ENCODE measurements at regions of chr5 and their contacts with region 1.

Region 1: GRCh38 chr5:132426525-132427138 is 57.1 kb downstream of the SLC22A5 start:
- DNase-seq: peak in 8 of 9 experiments; percentile 52 to 85 (median 66)
- ATAC-seq: peak; percentile 13
- H3K4me3 ChIP-seq: peak overlapping the region; percentile 17 to 31
- H3K4me3 Mint-ChIP-seq: peak overlapping the region; percentile 71
- H3K27ac ChIP-seq: peak overlapping the region; percentile 77 to 98
- H3K27ac Mint-ChIP-seq: peak overlapping the region; percentile 97
- H3K4me1 ChIP-seq: peaks cover 99% of the 10 kb centered on the region
- H3K4me1 Mint-ChIP-seq: peaks cover 95% of the 10 kb centered on the region
- H3K27me3 ChIP-seq: no peaks in the 10 kb centered on the region
- H3K27me3 Mint-ChIP-seq: no peaks in the 10 kb centered on the region
- CTCF ChIP-seq: no peak

Region 2: DNA sequence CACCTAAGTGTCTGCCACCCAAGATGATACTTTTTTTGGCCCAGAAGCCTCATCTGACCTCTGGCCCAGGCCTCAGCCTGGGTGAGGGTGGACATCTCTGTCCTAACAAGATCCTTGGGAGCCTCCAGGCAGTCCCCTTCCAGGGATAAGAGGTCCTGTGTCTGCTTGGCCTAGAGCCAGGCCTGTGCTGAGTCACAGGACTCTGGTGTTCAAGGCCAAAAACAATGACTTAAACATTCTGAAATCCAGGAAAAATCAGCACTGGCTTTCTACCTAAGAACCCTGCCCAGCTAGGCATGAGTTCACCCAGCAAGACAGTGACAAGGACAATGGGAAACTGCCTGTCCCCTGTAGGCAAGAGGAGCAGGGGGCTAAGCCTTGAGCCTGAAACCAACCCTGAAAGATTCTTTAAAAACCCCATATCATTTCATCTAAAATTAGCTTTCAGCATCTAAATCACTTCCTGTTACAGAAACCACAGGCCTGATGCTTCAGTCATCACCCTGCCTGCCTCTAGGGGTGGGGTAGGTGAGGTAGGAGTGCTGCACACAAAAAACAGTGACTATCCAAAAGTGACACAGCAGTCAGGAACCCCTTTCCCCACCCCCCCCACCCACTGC is 323.2 kb before region 1 on chr5:
- CTCF ChIA-PET with region 1: no interaction called
- POLR2A ChIA-PET with region 1: no interaction called
- intact Hi-C with region 1: loop called in 1 of 2 experiments (anchors 5 kb)
- DNase-seq: peak; percentile 46 to 90 (median 73)
- ATAC-seq: peak; percentile 79
- H3K4me3 ChIP-seq: no peak overlapping the region
- H3K4me3 Mint-ChIP-seq: peak overlapping the region; percentile 29
- H3K27ac ChIP-seq: peak overlapping the region; percentile 15 to 89
- H3K27ac Mint-ChIP-seq: peak overlapping the region; percentile 83
- H3K4me1 ChIP-seq: peaks cover 54% of the 10 kb centered on the region
- H3K4me1 Mint-ChIP-seq: peaks cover 68% of the 10 kb centered on the region
- H3K27me3 ChIP-seq: no peaks in the 10 kb centered on the region
- H3K27me3 Mint-ChIP-seq: no peaks in the 10 kb centered on the region
- CTCF ChIP-seq: peak; percentile 22

Region 3: DNA sequence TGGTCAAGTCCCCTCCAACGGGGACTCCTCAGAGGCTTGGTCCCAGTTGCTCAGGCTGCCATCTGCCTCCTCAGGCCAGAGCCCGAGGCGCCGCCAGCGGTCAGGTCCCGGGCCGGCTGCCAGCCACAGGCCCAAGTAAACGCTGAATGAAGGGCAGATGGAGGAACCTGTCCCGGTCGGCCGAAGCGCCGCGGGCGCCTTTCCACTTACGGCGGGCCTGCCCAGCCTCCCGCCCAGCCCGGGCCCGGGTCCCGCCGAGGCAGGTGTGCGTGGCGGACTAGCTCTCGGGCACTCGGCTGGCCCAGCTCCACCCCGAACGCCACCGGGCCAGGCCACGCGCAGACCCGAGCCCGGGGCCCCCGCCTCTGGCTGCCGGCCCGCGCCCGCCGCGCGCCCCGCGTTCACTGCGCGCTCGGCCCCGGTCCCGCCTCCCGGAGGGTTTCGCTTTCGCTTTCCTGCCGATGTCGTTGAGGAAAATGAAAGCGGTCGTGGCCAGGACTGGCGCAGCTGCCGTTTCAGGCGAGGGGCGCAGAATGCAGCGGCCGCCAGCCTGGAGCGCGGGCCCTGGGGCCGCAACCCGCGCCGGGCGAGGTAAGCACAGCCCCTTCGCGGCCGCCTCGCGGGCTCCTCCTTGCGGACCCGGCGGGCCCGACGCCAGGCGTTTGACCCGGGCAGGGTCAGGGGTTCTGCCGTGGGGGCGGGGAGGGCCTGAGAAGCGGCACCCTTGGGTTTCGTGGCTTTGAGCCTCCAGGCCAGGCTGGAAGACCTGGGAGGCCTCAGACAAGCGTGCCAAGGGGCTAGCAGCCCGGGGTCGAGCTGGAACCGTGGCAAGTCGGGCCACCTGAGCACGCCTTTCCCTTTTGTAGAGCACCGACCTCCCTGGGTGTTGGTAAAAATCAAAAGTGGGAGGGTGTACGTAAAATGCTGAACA is 15.9 kb before region 1 on chr5:
- CTCF ChIA-PET with region 1: interaction called, 17 read pairs
- POLR2A ChIA-PET with region 1: interaction called, 41 read pairs
- intact Hi-C with region 1: loop called in 1 of 2 experiments (anchors 2 kb)
- DNase-seq: peak; percentile 61 to 93 (median 80)
- ATAC-seq: peak; percentile 66
- H3K4me3 ChIP-seq: peak overlapping the region; percentile 73 to 94
- H3K4me3 Mint-ChIP-seq: peak overlapping the region; percentile 95
- H3K27ac ChIP-seq: peak overlapping the region; percentile 96 to 98
- H3K27ac Mint-ChIP-seq: peak overlapping the region; percentile 98
- H3K4me1 ChIP-seq: peaks cover 79% of the 10 kb centered on the region
- H3K4me1 Mint-ChIP-seq: peaks cover 80% of the 10 kb centered on the region
- H3K27me3 ChIP-seq: no peaks in the 10 kb centered on the region
- H3K27me3 Mint-ChIP-seq: no peaks in the 10 kb centered on the region
- CTCF ChIP-seq: peak; percentile 44

Region 4: GRCh38 chr5:132437604-132438266 is 11.1 kb after region 1 on chr5:
- CTCF ChIA-PET with region 1: interaction called, 17 read pairs
- POLR2A ChIA-PET with region 1: interaction called, 14 read pairs
- intact Hi-C with region 1: loop called in 1 of 2 experiments (anchors 1 kb)
- DNase-seq: peak in 8 of 9 experiments; percentile 43 to 85 (median 67)
- ATAC-seq: peak; percentile 92
- H3K4me3 ChIP-seq: no peak overlapping the region
- H3K4me3 Mint-ChIP-seq: peak overlapping the region; percentile 63
- H3K27ac ChIP-seq: peak overlapping the region; percentile 31 to 77
- H3K27ac Mint-ChIP-seq: peak overlapping the region; percentile 87
- H3K4me1 ChIP-seq: peaks cover 88% of the 10 kb centered on the region
- H3K4me1 Mint-ChIP-seq: peaks cover 90% of the 10 kb centered on the region
- H3K27me3 ChIP-seq: no peaks in the 10 kb centered on the region
- H3K27me3 Mint-ChIP-seq: no peaks in the 10 kb centered on the region
- CTCF ChIP-seq: no peak

Region 5: DNA sequence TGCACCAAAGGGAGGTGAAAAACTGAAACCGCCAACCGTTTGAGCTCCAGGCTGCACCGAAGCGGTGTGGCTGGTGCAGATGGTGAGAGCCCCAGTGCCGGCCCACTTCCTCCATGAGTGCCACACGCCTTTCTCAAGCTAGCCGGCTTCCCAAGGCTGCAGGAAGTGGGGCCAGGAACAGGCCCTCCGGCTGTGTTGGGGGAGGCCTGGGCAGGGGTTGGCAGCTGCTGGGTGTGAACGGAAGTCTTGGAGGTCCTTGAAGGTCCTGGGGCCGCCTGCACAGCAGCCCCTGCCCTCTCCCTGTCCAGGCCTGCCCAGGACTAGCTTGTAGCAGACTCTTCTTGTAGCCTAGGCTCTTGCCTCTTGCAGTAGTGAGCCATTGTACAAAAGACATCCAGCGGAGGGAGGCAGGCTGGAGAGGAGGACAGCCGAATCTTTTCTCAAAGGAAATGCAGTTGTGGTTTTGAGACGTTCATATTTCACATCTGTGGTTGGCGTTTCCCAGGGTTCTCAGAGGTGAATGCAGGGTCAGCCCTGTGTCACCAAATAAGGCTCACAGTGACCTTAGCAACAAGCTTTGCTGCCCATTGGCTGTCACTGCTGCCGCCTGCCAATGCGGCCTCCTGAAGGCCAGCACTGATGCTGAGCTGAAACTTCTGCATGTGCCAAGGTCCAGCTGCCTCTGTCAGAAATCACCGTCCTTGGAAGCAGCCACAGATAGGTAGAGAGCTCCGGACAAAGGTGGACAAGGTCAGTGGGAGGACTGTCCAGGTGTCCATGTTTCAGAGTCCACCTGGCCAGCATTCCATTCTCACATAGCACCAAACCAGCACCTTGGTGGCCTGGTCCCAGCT is 40.0 kb after region 1 on chr5:
- CTCF ChIA-PET with region 1: interaction called, 50 read pairs
- POLR2A ChIA-PET with region 1: interaction called, 132 read pairs
- intact Hi-C with region 1: loop called in 1 of 2 experiments (anchors 2 kb)
- DNase-seq: peak; percentile 53 to 92 (median 74)
- ATAC-seq: peak; percentile 63
- H3K4me3 ChIP-seq: peak overlapping the region; percentile 25 to 28
- H3K4me3 Mint-ChIP-seq: peak overlapping the region; percentile 68
- H3K27ac ChIP-seq: peak overlapping the region; percentile 51 to 85
- H3K27ac Mint-ChIP-seq: peak overlapping the region; percentile 95
- H3K4me1 ChIP-seq: peaks cover 88% of the 10 kb centered on the region
- H3K4me1 Mint-ChIP-seq: peaks cover 96% of the 10 kb centered on the region
- H3K27me3 ChIP-seq: no peaks in the 10 kb centered on the region
- H3K27me3 Mint-ChIP-seq: no peaks in the 10 kb centered on the region
- CTCF ChIP-seq: no peak

Region 6: DNA sequence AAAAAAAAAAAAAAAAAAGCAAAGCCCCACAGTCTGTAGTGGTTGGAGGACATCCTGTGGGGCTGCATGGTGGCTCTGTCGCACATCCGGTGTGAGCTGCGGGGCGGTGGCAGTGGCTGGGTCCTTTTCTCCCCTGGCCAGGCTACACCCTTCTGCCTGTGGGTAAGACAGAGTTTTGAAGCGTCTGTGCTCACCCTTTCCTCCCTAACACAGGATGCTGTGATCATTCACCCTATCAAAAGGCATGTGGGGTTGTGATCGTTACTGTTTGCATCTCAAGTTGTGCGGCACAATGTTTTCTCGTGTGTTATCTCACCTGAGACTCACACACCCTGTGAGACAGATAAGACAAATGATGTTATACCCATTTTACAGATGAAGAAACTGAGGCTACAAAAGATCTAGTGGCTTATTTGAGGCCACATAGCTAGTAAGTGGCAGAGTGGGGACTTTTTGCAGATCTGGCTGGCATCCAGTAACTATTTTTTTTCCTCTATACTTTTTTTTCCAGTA is 46.4 kb after region 1 on chr5:
- CTCF ChIA-PET with region 1: interaction called, 25 read pairs
- POLR2A ChIA-PET with region 1: interaction called, 132 read pairs
- intact Hi-C with region 1: no loop called
- DNase-seq: peak; percentile 70 to 97 (median 85)
- ATAC-seq: peak; percentile 73
- H3K4me3 ChIP-seq: no peak overlapping the region
- H3K4me3 Mint-ChIP-seq: peak overlapping the region; percentile 5
- H3K27ac ChIP-seq: peak overlapping the region; percentile 52 to 93
- H3K27ac Mint-ChIP-seq: peak overlapping the region; percentile 87
- H3K4me1 ChIP-seq: peaks cover 82% of the 10 kb centered on the region
- H3K4me1 Mint-ChIP-seq: peaks cover 92% of the 10 kb centered on the region
- H3K27me3 ChIP-seq: no peaks in the 10 kb centered on the region
- H3K27me3 Mint-ChIP-seq: no peaks in the 10 kb centered on the region
- CTCF ChIP-seq: no peak